ENCODE measurements at regions of chr9 and their contacts with region 1.

Region 1: DNA sequence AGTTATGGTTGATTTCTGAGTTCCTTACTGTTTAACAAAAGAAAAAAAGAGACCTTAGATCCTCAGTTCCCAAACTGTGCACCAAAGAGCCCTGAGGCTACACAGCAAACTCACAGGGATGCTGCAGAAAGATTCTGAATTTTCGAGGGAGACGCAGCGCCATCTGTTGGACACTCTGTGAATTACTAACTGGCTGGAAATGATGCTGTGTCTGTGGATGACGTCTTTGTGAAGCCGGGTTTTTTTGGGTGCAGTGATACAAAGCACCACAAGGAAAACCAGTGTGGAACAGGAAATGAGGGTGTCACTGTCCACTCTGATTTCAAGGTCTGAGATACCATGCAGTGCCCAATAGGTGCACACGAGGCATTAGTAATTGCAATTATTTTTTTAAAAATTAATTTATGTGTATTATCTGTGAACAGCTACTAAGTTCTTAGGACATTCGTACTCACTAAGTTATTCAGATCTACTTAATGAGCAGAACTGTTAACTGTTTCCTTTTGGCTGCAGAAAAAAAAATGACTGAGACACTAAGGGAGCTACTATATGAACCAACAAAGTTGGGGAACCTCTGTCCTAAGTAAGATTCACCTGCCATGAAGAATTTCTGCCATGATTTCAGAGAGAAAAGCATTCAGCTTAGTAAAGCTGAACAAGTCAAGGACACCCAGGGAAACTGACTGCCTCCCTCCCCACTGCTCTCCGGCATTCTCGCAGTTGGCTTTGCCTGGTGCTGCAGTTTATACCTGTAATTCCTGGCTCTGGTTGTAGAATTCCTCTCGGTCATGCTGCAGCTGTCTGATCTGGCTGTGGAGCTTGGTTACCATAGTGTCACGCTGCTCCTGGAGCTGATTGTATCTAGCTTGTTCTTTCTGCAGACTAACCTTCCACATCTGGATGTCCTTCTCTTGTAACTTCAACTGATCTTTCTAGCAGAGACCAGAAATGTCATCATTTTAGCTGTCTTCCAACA is 23.4 kb downstream of the SPACA9 start:
- DNase-seq: peak; percentile 63
- H3K4me3 Mint-ChIP-seq: no peak overlapping the region
- H3K27ac Mint-ChIP-seq: no peak overlapping the region
- H3K4me1 Mint-ChIP-seq: no peaks in the 10 kb centered on the region
- H3K27me3 Mint-ChIP-seq: no peaks in the 10 kb centered on the region
- CTCF ChIP-seq: peak; percentile 27

Region 2: GRCh38 chr9:132944302-132945185 is 42.4 kb after region 1 on chr9 and contains the start of gene TSC1:
- CTCF ChIA-PET with region 1: no interaction called
- intact Hi-C with region 1: no loop called
- DNase-seq: peak; percentile 94
- H3K4me3 Mint-ChIP-seq: peak within 1 kb of the TSS; percentile 78
- H3K27ac Mint-ChIP-seq: peak within 1 kb of the TSS; percentile 94
- H3K4me1 Mint-ChIP-seq: peaks cover 6% of the 10 kb centered on the region
- H3K27me3 Mint-ChIP-seq: no peaks in the 10 kb centered on the region
- CTCF ChIP-seq: no peak
- total RNA-seq, gene TSC1: 31.7 and 35.9 TPM in 2 replicates

Region 3: DNA sequence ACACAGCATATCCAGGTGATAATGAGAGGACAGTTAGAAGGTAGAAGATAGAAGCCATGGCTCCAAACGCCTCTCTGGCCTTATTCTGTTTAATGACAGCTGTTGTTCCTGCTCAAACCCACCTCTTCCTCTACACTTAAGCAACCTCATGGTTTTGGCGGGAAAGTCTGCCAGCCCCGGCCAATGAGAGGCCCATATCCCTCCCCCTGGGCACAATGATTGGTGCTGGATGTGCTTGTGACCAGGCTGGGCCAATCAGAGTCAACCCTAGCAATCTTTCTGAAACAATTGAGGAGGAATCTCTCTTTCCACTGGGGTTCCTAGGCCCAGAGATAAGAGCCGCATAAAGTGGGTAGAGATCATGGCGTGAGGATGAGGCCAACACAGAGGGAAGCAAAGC is 71.6 kb after region 1 on chr9:
- CTCF ChIA-PET with region 1: no interaction called
- intact Hi-C with region 1: loop called (anchors 2 kb)
- DNase-seq: no peak
- H3K4me3 Mint-ChIP-seq: no peak overlapping the region
- H3K27ac Mint-ChIP-seq: no peak overlapping the region
- H3K4me1 Mint-ChIP-seq: peaks cover 21% of the 10 kb centered on the region
- H3K27me3 Mint-ChIP-seq: peaks cover 13% of the 10 kb centered on the region
- CTCF ChIP-seq: no peak